Ovary (tissue), 10 donors: ENCODE measurements at regions of chr17 and their contacts with region 1.

Region 1: GRCh38 chr17:80364216-80364618 is 50.8 kb upstream of the ENDOV start:
- DNase-seq: peak in 3 of 5 donors; percentile 40 to 55 (median 46)
- H3K4me3 ChIP-seq: no peak overlapping the region
- H3K27ac ChIP-seq: no peak overlapping the region
- H3K4me1 ChIP-seq: peaks cover 11% of the 10 kb centered on the region
- H3K27me3 ChIP-seq: no peaks in the 10 kb centered on the region
- CTCF ChIP-seq: no peak
- EP300 ChIP-seq: no peak
- POLR2A ChIP-seq: no peak

Region 2: DNA sequence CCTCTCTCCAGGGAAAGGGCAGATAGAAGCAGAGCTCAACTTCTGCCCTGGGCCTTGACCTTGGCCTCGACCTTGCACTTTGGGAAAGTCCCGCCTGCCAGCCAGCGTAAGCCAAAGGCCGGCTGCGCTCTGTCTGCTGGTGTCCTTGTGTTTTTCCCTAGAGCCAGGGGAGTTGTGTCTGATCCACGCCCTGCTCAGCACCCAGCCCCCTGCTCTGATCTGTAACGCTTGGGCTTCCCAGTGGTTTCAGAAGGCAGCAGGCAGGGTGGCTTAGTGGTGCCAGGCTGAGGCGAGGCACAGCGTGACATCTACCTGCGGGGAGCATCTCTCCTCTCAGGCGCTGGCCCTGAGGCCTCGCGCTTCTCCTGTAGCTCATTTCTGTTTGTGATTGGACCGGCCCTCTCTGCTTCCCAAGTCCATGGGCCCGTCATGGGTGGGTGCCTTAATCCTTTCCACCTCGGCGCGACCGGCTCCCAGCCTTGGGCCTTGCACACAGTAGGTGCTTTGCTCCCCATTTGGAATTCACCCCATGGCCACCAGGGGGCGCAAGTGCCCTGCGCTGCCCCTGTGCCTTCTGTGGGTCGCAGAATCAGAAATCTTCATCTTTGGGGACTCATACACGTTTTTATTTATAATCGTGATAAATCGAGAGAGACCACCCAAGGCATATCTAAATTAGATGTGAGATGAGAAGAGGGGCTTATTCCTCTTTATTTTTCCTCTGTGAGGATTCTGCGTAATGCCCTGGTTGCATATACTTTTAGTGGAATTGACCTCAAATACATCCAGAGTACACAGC is 168.3 kb before region 1 on chr17:
- intact Hi-C with region 1: loop called in 1 of 4 experiments (anchors 10 kb)
- DNase-seq: peak in 1 of 5 donors; percentile 33
- H3K4me3 ChIP-seq: no peak overlapping the region
- H3K27ac ChIP-seq: no peak overlapping the region
- H3K4me1 ChIP-seq: no peaks in the 10 kb centered on the region
- H3K27me3 ChIP-seq: no peaks in the 10 kb centered on the region
- CTCF ChIP-seq: peak; percentile 52 to 69 (median 58)
- EP300 ChIP-seq: no peak
- POLR2A ChIP-seq: no peak

Region 3: GRCh38 chr17:80263253-80264204 is 100.7 kb before region 1 on chr17:
- intact Hi-C with region 1: loop called in 1 of 4 experiments (anchors 10 kb)
- DNase-seq: peak; percentile 82 to 89 (median 85)
- H3K4me3 ChIP-seq: peak overlapping the region; percentile 32
- H3K27ac ChIP-seq: peak overlapping the region in 1 of 2 donors; percentile 96
- H3K4me1 ChIP-seq: peaks cover 16% of the 10 kb centered on the region
- H3K27me3 ChIP-seq: no peaks in the 10 kb centered on the region
- CTCF ChIP-seq: no peak
- EP300 ChIP-seq: no peak
- POLR2A ChIP-seq: no peak